Activated CD8-positive, alpha-beta T cell treated with anti-CD3 and anti-CD28 coated beads, Interleukin-2, amount 10 ng/mL, durations not matched to agents 7 days and 5 days (primary cell): ENCODE measurements at regions of chr3 and their contacts with region 1.

Region 1: DNA sequence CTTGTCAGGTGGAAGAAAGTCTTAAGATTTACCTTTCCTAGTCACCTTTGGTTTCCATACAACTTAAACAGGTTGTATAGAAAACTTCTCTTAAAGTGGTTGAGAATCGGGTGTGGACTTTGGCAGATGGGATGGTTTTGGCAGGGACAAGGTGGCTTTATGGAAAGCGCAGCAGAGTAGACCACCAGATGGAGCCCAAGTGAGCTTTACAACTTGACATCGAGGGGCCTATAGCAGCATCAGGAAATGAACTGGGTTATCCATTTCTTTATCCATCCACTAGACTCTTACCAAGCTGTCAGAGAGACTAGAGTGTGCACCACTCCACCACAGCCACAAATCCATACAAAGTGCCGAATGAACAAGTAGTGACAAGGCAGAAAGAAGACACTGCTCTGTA is 85.3 kb upstream of the MBNL1 start:
- DNase-seq: peak; percentile 71
- ATAC-seq: peak; percentile 90
- H3K4me3 Mint-ChIP-seq: no peak overlapping the region
- H3K27ac Mint-ChIP-seq: no peak overlapping the region
- H3K4me1 Mint-ChIP-seq: peaks cover 44% of the 10 kb centered on the region
- H3K27me3 Mint-ChIP-seq: no peaks in the 10 kb centered on the region

Region 2: GRCh38 chr3:152071924-152072323 is 111.5 kb before region 1 on chr3:
- CTCF ChIA-PET with region 1: interaction called, 10 read pairs
- POLR2A ChIA-PET with region 1: no interaction called
- DNase-seq: peak; percentile 28
- ATAC-seq: peak; percentile 67
- H3K4me3 Mint-ChIP-seq: no peak overlapping the region
- H3K27ac Mint-ChIP-seq: no peak overlapping the region
- H3K4me1 Mint-ChIP-seq: no peaks in the 10 kb centered on the region
- H3K27me3 Mint-ChIP-seq: no peaks in the 10 kb centered on the region

Region 3: DNA sequence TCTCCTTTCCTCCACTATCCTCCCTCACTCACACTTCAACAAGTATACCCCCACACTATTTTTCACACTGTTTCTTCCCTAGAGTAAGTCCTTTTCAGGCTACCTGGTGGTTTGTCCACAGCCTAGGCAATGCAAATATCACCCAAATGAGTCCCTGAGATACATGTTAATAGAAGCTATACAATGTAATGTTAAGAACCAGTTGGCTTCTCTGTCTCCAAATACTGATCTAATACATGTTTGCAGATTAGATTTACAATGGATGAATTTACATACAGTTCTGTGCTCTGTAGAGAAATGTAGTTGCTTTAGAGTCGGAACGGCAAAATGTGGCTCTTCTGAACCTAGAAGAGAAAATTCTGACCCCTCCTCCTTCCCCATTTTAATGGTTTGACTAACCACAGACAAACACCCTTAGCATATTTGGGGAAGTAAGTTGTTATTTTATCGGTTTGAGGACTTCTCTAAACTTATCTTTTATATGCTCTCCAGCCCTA is 21.7 kb after region 1 on chr3:
- CTCF ChIA-PET with region 1: interaction called, 19 read pairs
- POLR2A ChIA-PET with region 1: interaction called, 4 read pairs
- DNase-seq: no peak
- ATAC-seq: peak; percentile 48
- H3K4me3 Mint-ChIP-seq: peak overlapping the region; percentile 75
- H3K27ac Mint-ChIP-seq: peak overlapping the region; percentile 85
- H3K4me1 Mint-ChIP-seq: peaks cover 69% of the 10 kb centered on the region
- H3K27me3 Mint-ChIP-seq: no peaks in the 10 kb centered on the region

Region 4: GRCh38 chr3:152258448-152259393 is 75.2 kb after region 1 on chr3:
- CTCF ChIA-PET with region 1: interaction called, 12 read pairs
- POLR2A ChIA-PET with region 1: interaction called, 5 read pairs
- DNase-seq: peak; percentile 76
- ATAC-seq: peak; percentile 74
- H3K4me3 Mint-ChIP-seq: peak overlapping the region; percentile 71
- H3K27ac Mint-ChIP-seq: peak overlapping the region; percentile 93
- H3K4me1 Mint-ChIP-seq: peaks cover 81% of the 10 kb centered on the region
- H3K27me3 Mint-ChIP-seq: no peaks in the 10 kb centered on the region

Region 5: DNA sequence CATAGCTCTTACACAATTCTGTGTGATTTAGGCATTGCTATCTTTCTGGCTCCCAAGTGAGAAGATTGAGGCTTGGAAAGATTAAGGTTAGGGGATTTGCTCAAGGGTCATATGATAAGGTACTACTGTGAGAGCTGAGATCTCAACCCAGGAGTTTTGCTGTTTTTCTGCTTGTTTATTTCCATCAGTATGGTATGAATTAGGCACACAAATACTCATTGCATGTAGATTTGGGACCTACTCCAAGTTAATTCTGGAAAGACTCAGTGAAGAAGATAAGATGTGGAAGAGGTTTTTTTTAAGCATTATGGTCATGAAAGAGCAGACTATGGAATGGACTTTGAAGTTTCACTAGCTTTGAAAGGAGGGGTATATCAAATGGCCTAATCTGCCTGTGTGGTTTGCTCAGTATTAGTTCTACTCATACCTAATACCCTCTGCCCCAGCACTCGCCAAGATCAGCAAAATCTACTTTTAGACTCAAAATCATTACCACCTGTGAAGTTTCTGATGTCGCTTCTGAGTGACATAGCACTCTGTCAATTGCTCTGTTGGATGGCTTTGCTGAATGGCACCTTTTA is 97.8 kb after region 1 on chr3:
- CTCF ChIA-PET with region 1: interaction called, 24 read pairs
- POLR2A ChIA-PET with region 1: interaction called, 4 read pairs
- DNase-seq: no peak
- ATAC-seq: peak; percentile 9
- H3K4me3 Mint-ChIP-seq: peak overlapping the region; percentile 49
- H3K27ac Mint-ChIP-seq: peak overlapping the region; percentile 55
- H3K4me1 Mint-ChIP-seq: peaks cover 76% of the 10 kb centered on the region
- H3K27me3 Mint-ChIP-seq: no peaks in the 10 kb centered on the region

Region 6: DNA sequence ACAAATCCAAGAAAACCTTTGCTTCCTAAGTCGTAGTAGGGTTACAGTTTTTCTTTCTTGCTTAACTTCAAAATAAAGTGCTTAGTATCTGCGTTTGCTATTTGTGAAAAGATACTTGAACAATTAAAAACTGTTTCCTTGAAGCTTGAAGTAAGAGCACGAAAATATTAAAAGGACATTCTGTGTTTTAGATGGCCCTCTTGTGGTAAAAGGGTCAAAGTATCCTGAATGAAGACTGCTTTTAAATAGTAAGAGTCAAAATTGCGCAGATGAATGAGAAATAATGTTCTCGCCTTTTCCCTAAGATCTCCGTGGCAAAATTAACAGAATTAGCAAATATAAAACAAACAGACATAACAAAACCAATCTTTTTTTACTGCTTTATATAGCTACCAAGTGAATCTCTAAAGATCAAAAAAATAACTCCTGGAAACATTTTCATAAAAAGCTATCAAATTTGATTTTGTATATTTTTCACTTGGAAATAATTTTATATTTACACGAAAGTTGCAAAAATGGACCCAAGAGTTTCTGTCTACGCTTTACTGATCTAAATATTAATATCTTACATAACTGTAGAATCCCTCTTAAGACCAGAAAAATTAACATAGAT is 260.7 kb after region 1 on chr3:
- CTCF ChIA-PET with region 1: interaction called, 22 read pairs
- POLR2A ChIA-PET with region 1: no interaction called
- DNase-seq: no peak
- ATAC-seq: no peak
- H3K4me3 Mint-ChIP-seq: no peak overlapping the region
- H3K27ac Mint-ChIP-seq: no peak overlapping the region
- H3K4me1 Mint-ChIP-seq: peaks cover 49% of the 10 kb centered on the region
- H3K27me3 Mint-ChIP-seq: no peaks in the 10 kb centered on the region